CD4-positive, alpha-beta T cell (primary cell): ENCODE measurements at regions of chr1 and their contacts with region 1.

Region 1: GRCh38 chr1:89632657-89633247 is at the start of gene LRRC8C:
- DNase-seq: peak; percentile 75 to 95 (median 86)
- ATAC-seq: peak; percentile 77
- H3K4me3 ChIP-seq: peak within 1 kb of the TSS; percentile 95
- H3K4me3 Mint-ChIP-seq: peak within 1 kb of the TSS; percentile 99
- H3K27ac ChIP-seq: peak within 1 kb of the TSS; percentile 92 to 94
- H3K27ac Mint-ChIP-seq: peak within 1 kb of the TSS; percentile 98
- H3K4me1 ChIP-seq: peaks cover 41% of the 10 kb centered on the region
- H3K4me1 Mint-ChIP-seq: peaks cover 89% of the 10 kb centered on the region
- H3K27me3 ChIP-seq: no peaks in the 10 kb centered on the region
- H3K27me3 Mint-ChIP-seq: no peaks in the 10 kb centered on the region
- CTCF ChIP-seq: no peak
- total RNA-seq, gene LRRC8C: 28.4 to 30.2 TPM

Region 2: GRCh38 chr1:89483010-89483756 is 149.6 kb before region 1 on chr1:
- CTCF ChIA-PET with region 1: interaction called, 4 read pairs
- POLR2A ChIA-PET with region 1: no interaction called
- intact Hi-C with region 1: loop called in 1 of 2 experiments (anchors 2 kb)
- DNase-seq: peak; percentile 57 to 88 (median 72)
- ATAC-seq: peak; percentile 95
- H3K4me3 ChIP-seq: no peak overlapping the region
- H3K4me3 Mint-ChIP-seq: no peak overlapping the region
- H3K27ac ChIP-seq: no peak overlapping the region
- H3K27ac Mint-ChIP-seq: no peak overlapping the region
- H3K4me1 ChIP-seq: no peaks in the 10 kb centered on the region
- H3K4me1 Mint-ChIP-seq: peaks cover 14% of the 10 kb centered on the region
- H3K27me3 ChIP-seq: no peaks in the 10 kb centered on the region
- H3K27me3 Mint-ChIP-seq: no peaks in the 10 kb centered on the region
- CTCF ChIP-seq: peak; percentile 88

Region 3: DNA sequence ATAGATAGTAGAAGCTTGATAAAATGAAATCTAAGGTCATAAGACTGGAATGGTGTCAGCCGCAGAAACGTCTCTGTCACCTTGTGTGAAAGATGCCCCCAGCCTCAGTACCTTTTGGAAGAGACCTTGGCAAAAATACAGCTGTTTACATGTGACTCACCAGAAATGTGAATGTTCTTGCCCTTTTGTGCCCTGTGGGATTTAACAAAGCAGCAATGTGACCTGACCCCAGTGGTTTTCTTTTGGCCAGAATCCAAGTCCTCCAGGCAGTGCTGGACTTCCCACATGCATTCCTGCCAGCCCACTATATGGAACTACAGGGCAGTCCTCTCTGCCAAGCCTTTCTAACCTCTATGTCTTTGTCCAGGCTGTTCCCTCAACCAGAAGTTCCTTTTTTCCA is 27.1 kb before region 1 on chr1:
- CTCF ChIA-PET with region 1: interaction called, 84 read pairs
- POLR2A ChIA-PET with region 1: interaction called, 683 read pairs
- intact Hi-C with region 1: loop called in 1 of 2 experiments (anchors 1 kb)
- DNase-seq: no peak
- ATAC-seq: no peak
- H3K4me3 ChIP-seq: no peak overlapping the region
- H3K4me3 Mint-ChIP-seq: peak overlapping the region; percentile 56
- H3K27ac ChIP-seq: peak overlapping the region; percentile 80 to 91
- H3K27ac Mint-ChIP-seq: peak overlapping the region; percentile 99
- H3K4me1 ChIP-seq: peaks cover 81% of the 10 kb centered on the region
- H3K4me1 Mint-ChIP-seq: peaks cover 94% of the 10 kb centered on the region
- H3K27me3 ChIP-seq: no peaks in the 10 kb centered on the region
- H3K27me3 Mint-ChIP-seq: no peaks in the 10 kb centered on the region
- CTCF ChIP-seq: no peak

Region 4: DNA sequence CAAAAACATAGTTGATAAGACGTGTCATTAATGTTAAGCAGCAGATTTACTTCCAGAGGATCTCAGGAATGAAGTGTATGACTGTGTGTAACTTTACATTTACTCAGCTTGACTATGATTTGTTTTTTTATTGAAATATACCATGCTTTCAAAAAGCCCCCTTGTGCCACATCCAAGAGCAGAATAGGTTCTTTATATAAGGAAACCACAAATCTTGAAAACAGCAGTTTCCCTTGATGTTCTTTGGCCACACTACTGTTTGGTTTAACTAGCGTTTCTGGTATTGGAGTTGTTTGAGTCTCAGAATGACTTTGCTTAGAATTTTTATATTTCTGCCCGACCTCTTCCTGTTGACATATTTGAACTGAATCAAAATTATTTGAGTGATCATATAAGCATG is 25.1 kb after region 1 on chr1:
- CTCF ChIA-PET with region 1: interaction called, 6 read pairs
- POLR2A ChIA-PET with region 1: interaction called, 139 read pairs
- intact Hi-C with region 1: loop called (anchors 1 to 2 kb)
- DNase-seq: peak in 4 of 14 experiments; percentile 16 to 86 (median 84)
- ATAC-seq: peak; percentile 76
- H3K4me3 ChIP-seq: peak overlapping the region; percentile 11
- H3K4me3 Mint-ChIP-seq: peak overlapping the region; percentile 70
- H3K27ac ChIP-seq: peak overlapping the region; percentile 62 to 63
- H3K27ac Mint-ChIP-seq: peak overlapping the region; percentile 88
- H3K4me1 ChIP-seq: peaks cover 48% of the 10 kb centered on the region
- H3K4me1 Mint-ChIP-seq: peaks cover 96% of the 10 kb centered on the region
- H3K27me3 ChIP-seq: no peaks in the 10 kb centered on the region
- H3K27me3 Mint-ChIP-seq: no peaks in the 10 kb centered on the region
- CTCF ChIP-seq: no peak

Region 5: DNA sequence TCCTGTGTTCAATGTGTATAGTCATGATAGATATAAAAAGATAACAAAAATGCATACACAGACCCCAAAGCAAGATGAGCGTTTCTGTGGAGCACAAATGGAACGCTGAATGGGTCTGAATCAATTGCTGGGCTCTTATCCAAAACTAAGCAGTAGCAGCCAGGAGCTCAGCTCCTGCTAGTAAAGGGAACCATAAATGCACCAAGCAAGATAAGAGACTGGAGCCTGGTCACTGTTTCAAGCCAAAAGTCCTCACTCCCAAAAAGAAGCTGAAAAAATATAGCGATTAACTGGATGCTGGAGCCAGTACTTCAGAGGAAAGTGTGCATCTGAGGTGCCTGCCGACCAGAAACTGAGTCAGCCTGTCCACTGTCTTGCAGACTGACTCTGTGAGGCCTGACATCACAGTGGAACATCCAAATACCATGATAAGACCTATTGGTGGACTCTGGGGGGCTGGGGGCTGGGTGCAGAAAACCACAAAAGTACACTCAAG is 69.0 kb after region 1 on chr1:
- CTCF ChIA-PET with region 1: no interaction called
- POLR2A ChIA-PET with region 1: interaction called, 3 read pairs
- intact Hi-C with region 1: loop called (anchors 5 to 10 kb)
- DNase-seq: no peak
- ATAC-seq: no peak
- H3K4me3 ChIP-seq: no peak overlapping the region
- H3K4me3 Mint-ChIP-seq: no peak overlapping the region
- H3K27ac ChIP-seq: no peak overlapping the region
- H3K27ac Mint-ChIP-seq: peak overlapping the region; percentile 35
- H3K4me1 ChIP-seq: peaks cover 26% of the 10 kb centered on the region
- H3K4me1 Mint-ChIP-seq: peaks cover 76% of the 10 kb centered on the region
- H3K27me3 ChIP-seq: no peaks in the 10 kb centered on the region
- H3K27me3 Mint-ChIP-seq: no peaks in the 10 kb centered on the region
- CTCF ChIP-seq: no peak

Region 6: GRCh38 chr1:89762779-89763648 is 130.3 kb after region 1 on chr1:
- CTCF ChIA-PET with region 1: interaction called, 133 read pairs
- POLR2A ChIA-PET with region 1: interaction called, 83 read pairs
- intact Hi-C with region 1: loop called (anchors 1 to 2 kb)
- DNase-seq: peak; percentile 80 to 92 (median 85)
- ATAC-seq: peak; percentile 99
- H3K4me3 ChIP-seq: peak overlapping the region; percentile 61
- H3K4me3 Mint-ChIP-seq: peak overlapping the region; percentile 86
- H3K27ac ChIP-seq: peak overlapping the region in 1 of 2 donors; percentile 42
- H3K27ac Mint-ChIP-seq: peak overlapping the region; percentile 78
- H3K4me1 ChIP-seq: peaks cover 44% of the 10 kb centered on the region
- H3K4me1 Mint-ChIP-seq: peaks cover 51% of the 10 kb centered on the region
- H3K27me3 ChIP-seq: no peaks in the 10 kb centered on the region
- H3K27me3 Mint-ChIP-seq: no peaks in the 10 kb centered on the region
- CTCF ChIP-seq: peak; percentile 94

Region 7: DNA sequence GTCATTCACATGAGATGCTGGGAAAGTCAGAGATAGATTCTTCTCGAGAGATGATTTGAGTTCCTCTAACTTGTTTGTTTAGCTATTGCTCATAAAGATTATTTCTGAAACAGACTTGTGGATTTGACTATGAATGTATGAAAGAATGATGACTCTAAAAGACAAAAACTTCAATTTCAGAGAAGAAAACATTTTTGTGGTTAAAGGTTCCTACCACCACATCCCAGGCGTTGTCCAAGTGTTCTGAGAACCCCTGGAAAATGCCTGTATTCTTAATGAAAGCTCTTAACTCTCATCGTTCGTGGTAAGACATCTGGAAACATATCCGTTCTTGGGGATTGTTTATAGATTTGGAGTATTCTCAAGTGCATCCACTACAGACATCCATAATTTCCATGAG is 855.7 kb after region 1 on chr1:
- CTCF ChIA-PET with region 1: no interaction called
- POLR2A ChIA-PET with region 1: no interaction called
- intact Hi-C with region 1: no loop called
- DNase-seq: no peak
- ATAC-seq: no peak
- H3K4me3 ChIP-seq: no peak overlapping the region
- H3K4me3 Mint-ChIP-seq: no peak overlapping the region
- H3K27ac ChIP-seq: no peak overlapping the region
- H3K27ac Mint-ChIP-seq: no peak overlapping the region
- H3K4me1 ChIP-seq: no peaks in the 10 kb centered on the region
- H3K4me1 Mint-ChIP-seq: no peaks in the 10 kb centered on the region
- H3K27me3 ChIP-seq: no peaks in the 10 kb centered on the region
- H3K27me3 Mint-ChIP-seq: no peaks in the 10 kb centered on the region
- CTCF ChIP-seq: no peak